ENCODE measurements at regions of chr10 and their contacts with region 1.

Region 1: GRCh38 chr10:3942937-3943489 is 158.0 kb upstream of the KLF6 start:
- DNase-seq: no peak
- H3K4me3 ChIP-seq: no peak overlapping the region
- H3K27ac ChIP-seq: no peak overlapping the region
- H3K4me1 ChIP-seq: peaks cover 16% of the 10 kb centered on the region
- H3K27me3 ChIP-seq: no peaks in the 10 kb centered on the region
- CTCF ChIP-seq: no peak

Region 2: GRCh38 chr10:3889961-3890522 is 53.0 kb before region 1 on chr10:
- CTCF ChIA-PET with region 1: no interaction called
- dilution Hi-C with region 1: loop called (anchors 5 kb)
- in situ Hi-C with region 1: no loop called
- intact Hi-C with region 1: no loop called
- DNase-seq: peak; percentile 83
- H3K4me3 ChIP-seq: no peak overlapping the region
- H3K27ac ChIP-seq: peak overlapping the region; percentile 96
- H3K4me1 ChIP-seq: peaks cover 52% of the 10 kb centered on the region
- H3K27me3 ChIP-seq: no peaks in the 10 kb centered on the region
- CTCF ChIP-seq: no peak